ENCODE measurements at regions of chrX and their contacts with region 1.

Region 1: DNA sequence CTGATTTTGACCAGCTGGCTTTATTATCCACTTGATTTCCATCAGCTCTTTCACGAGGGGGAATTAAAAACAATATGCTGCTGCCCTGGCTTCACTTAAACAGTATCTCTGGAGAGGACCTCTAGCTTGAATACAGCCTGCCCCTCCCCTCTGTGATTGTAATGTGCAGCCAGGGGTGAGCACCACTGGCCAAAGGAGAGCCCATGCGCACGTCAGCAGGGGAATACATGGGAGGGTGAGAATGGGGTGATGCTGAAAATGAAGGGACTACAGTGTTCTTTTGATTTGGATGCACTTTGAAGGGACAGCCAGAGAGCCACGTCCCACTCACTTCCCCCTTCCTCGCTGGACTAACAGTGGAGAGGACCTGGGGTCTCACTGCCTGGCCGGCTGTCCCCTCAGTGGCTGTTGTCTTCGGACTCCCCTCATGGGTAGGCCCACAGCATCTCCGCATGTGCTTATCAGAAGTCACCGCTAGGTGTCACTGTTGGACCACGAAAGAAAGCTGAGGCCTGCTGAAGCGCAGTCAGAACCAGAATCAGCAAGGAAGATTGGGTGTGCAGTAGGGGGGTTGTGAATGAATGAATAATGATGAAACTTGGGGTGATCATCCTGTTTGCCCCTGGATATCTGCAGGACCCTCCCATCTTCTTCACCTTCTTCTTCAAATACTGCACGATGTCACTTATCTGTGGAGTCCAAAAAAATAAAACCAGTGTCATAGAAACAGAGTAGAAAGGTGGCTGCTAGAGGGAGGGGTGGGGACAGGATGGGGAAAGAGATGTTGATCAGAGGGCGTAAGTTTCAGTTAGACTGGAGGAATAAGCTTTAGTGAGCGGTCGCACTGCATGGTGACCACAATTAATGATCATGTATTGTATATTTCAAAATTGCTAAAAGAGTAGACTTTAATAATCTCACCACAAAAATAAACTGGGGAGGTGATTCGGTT is 32.8 kb downstream of the CLCN4 start:
- DNase-seq: peak; percentile 35
- ATAC-seq: peak; percentile 93
- H3K4me3 ChIP-seq: peak overlapping the region in 1 of 2 experiments; percentile 4; a peak in 1 of 4 replicates
- H3K27ac ChIP-seq: no peak overlapping the region
- H3K4me1 ChIP-seq: no peaks in the 10 kb centered on the region; the same call in 1 of the 2 replicates
- H3K27me3 ChIP-seq: no peaks in the 10 kb centered on the region
- CTCF ChIP-seq: peak; percentile 61

Region 2: GRCh38 chrX:10206317-10206716 is 16.7 kb after region 1 on chrX:
- CTCF ChIA-PET with region 1: no interaction called
- POLR2A ChIA-PET with region 1: no interaction called
- in situ Hi-C with region 1: no loop called
- intact Hi-C with region 1: no loop called
- DNase-seq: no peak
- ATAC-seq: no peak
- H3K4me3 ChIP-seq: no peak overlapping the region
- H3K27ac ChIP-seq: no peak overlapping the region
- H3K4me1 ChIP-seq: no peaks in the 10 kb centered on the region
- H3K27me3 ChIP-seq: no peaks in the 10 kb centered on the region
- CTCF ChIP-seq: no peak

Region 3: DNA sequence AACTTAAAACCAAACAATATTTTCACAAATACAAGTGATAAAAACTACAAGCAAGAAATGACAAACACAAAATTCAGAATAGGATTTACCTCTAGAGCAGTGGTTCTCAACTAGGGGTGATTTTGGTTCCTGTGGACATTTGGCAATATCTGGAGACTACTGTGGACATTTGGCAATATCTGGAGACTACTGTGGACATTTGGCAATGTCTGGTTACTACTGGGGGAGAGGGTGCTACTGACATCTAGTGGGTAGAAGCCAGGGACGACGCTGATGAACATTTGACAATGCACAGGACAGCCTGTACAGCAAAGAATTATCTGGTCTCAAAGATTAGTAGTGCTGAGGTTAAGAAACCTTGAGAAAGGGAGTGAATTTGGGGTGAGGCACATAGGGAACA is 137.0 kb after region 1 on chrX:
- CTCF ChIA-PET with region 1: no interaction called
- POLR2A ChIA-PET with region 1: no interaction called
- in situ Hi-C with region 1: no loop called
- intact Hi-C with region 1: loop called (anchors 10 kb)
- DNase-seq: no peak
- ATAC-seq: peak; percentile 75
- H3K4me3 ChIP-seq: no peak overlapping the region
- H3K27ac ChIP-seq: no peak overlapping the region
- H3K4me1 ChIP-seq: no peaks in the 10 kb centered on the region
- H3K27me3 ChIP-seq: no peaks in the 10 kb centered on the region
- CTCF ChIP-seq: peak; percentile 74

Region 4: DNA sequence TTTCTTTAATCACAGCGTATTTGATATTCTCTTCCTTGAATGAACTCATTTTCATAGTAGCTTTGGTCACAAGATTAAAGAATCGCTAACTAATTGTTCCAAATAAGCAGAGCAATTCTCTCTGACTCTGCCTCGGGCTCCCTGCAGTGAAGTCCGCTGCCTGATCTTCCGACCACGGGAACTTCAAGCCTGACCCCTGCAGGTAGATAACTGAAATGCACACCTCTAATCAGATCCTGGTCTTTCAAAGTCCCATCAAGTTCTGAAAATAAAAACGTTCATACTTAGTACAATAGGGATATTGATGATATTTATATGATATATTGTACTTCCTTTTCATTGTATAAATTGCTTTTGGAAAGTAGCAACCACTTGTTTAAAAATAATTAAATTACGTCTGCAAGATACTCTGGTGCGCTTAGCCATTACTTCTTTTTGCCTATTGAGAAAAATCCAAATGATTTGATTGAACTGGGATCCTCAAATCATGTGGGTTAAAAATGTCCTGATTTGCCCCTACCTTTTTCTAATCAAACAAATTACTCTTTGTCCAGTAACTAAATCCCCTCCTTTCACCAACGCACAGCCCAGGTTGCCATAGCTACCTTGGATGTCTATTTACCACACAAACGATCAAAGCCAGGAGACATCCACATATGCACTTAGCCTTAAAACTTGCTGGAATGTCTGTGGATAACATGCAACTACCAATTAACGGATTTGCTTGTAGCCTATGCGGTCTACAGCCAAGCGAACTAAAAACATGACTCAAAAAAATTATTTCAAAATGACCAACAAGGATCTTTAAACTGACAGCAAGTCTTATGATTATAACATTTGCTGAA is 426.6 kb after region 1 on chrX:
- CTCF ChIA-PET with region 1: interaction called, 3 read pairs
- POLR2A ChIA-PET with region 1: no interaction called
- in situ Hi-C with region 1: no loop called
- intact Hi-C with region 1: loop called (anchors 5 kb)
- DNase-seq: no peak
- ATAC-seq: no peak
- H3K4me3 ChIP-seq: peak overlapping the region; percentile 34 to 64; a peak in 3 of 4 replicates
- H3K27ac ChIP-seq: peak overlapping the region; percentile 84
- H3K4me1 ChIP-seq: peaks cover 24% of the 10 kb centered on the region
- H3K27me3 ChIP-seq: no peaks in the 10 kb centered on the region
- CTCF ChIP-seq: peak; percentile 81

Region 5: GRCh38 chrX:10636337-10636736 is 446.7 kb after region 1 on chrX:
- CTCF ChIA-PET with region 1: interaction called, 3 read pairs
- POLR2A ChIA-PET with region 1: no interaction called
- in situ Hi-C with region 1: no loop called
- intact Hi-C with region 1: loop called (anchors 2 kb)
- DNase-seq: no peak
- ATAC-seq: peak; percentile 55; the same call in 1 of the 2 replicates
- H3K4me3 ChIP-seq: no peak overlapping the region
- H3K27ac ChIP-seq: peak overlapping the region; percentile 72
- H3K4me1 ChIP-seq: no peaks in the 10 kb centered on the region; the same call in 1 of the 2 replicates
- H3K27me3 ChIP-seq: no peaks in the 10 kb centered on the region
- CTCF ChIP-seq: peak; percentile 81

Region 6: DNA sequence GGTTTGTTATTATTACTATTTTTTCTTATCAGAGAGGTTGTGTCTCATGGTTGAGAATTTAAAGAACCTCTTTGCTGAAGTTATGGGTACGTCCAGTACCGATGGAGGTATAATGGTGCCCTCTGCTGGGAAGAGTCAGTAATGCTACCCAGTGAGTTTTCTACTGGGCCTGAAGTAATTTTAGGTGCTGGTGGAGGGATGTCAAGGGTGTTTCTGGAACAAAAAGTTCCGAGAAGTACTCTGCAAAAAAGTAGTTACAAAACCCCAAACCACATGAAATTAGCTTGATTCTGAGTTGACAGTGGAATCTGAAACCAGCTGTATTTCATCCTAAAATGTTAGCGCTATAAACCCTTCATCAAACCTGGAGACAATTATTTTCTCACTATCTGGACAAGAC is 533.3 kb after region 1 on chrX:
- CTCF ChIA-PET with region 1: no interaction called
- POLR2A ChIA-PET with region 1: no interaction called
- in situ Hi-C with region 1: no loop called
- intact Hi-C with region 1: loop called (anchors 10 kb)
- DNase-seq: no peak
- ATAC-seq: peak; percentile 69; the same call in 1 of the 2 replicates
- H3K4me3 ChIP-seq: no peak overlapping the region
- H3K27ac ChIP-seq: no peak overlapping the region
- H3K4me1 ChIP-seq: no peaks in the 10 kb centered on the region
- H3K27me3 ChIP-seq: no peaks in the 10 kb centered on the region
- CTCF ChIP-seq: peak; percentile 76

Region 7: DNA sequence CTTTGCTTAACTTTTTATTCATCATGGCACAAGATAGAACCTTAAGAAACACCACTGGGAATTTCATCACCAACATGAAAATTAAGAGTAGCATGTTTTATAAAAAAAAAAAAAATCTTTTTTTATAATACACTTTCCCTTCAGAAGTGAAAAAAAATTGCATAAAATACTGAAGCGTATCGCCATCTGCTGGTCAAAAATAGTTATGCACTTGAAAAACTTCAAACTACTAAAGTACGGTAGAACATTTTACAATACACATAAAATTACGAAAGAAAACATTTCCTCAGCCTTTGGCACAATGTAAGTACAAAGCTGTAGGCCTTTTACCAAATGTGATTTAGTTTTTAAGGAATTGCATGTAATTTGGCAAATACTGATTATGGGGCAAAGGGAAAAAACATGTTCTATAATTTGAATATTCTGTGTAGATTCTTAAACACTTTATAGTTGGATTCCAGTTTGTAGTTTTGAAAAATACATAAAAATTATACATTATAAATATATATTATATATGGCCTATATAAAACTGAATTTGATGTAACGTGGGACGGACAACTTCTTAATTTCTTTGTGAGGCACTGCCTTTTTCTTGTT is 948.0 kb after region 1 on chrX:
- CTCF ChIA-PET with region 1: no interaction called
- POLR2A ChIA-PET with region 1: no interaction called
- in situ Hi-C with region 1: no loop called
- intact Hi-C with region 1: loop called (anchors 2 kb)
- DNase-seq: no peak
- ATAC-seq: no peak
- H3K4me3 ChIP-seq: no peak overlapping the region
- H3K27ac ChIP-seq: no peak overlapping the region
- H3K4me1 ChIP-seq: no peaks in the 10 kb centered on the region
- H3K27me3 ChIP-seq: no peaks in the 10 kb centered on the region
- CTCF ChIP-seq: peak; percentile 62; the same call in 1 of the 2 replicates

Region 8: DNA sequence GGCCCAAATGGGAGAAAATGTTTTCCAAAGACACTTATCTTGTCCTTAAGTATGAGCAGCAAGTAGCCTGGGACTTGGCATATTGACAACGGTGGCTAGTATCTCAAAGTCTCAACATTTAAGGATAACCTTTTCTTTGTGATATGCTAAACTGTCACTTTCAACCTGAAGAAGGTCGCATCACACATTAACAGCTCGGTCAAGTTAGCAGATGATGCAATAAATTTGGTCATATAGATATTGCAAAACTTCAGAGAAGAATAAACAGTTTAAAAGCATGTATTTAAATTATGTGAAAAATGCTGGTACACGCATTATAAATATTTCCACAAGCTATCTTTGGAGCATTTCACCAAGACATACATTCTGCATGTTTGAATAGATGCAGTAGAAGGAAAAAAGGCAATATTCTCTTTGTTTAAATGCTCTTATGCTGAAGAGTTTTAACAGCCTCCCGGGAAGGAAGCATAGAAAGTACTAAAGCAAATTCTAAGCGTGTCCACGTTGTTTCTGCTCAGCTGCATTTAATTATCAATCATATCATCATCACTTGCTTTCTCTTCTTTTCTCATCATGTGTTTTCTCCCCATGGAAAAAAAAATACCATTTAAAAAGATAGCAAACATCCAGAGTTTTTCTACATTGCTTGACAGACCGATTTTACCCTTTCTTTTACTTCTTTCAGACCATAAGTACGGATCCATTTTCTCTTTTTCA is 1451.9 kb after region 1 on chrX:
- CTCF ChIA-PET with region 1: no interaction called
- POLR2A ChIA-PET with region 1: no interaction called
- in situ Hi-C with region 1: no loop called
- intact Hi-C with region 1: no loop called
- DNase-seq: no peak
- ATAC-seq: no peak
- H3K4me3 ChIP-seq: no peak overlapping the region
- H3K27ac ChIP-seq: no peak overlapping the region
- H3K4me1 ChIP-seq: no peaks in the 10 kb centered on the region
- H3K27me3 ChIP-seq: no peaks in the 10 kb centered on the region
- CTCF ChIP-seq: no peak